ENCODE measurements at regions of chr1 and their contacts with region 1.

Region 1: GRCh38 chr1:66996018-66996682 is 57.8 kb downstream of the SLC35D1 start:
- DNase-seq: peak in 4 of 5 donors; percentile 38 to 57 (median 48)
- ATAC-seq: peak in 3 of 4 donors; percentile 51 to 70 (median 52)
- H3K4me3 ChIP-seq: no peak overlapping the region
- H3K27ac ChIP-seq: no peak overlapping the region
- H3K4me1 ChIP-seq: peaks cover 0 to 9% (median 2%) of the 10 kb centered on the region in 12 donors
- H3K27me3 ChIP-seq: no peaks in the 10 kb centered on the region
- CTCF ChIP-seq: peak; percentile 45 to 83 (median 70)
- POLR2A ChIP-seq: no peak

Region 2: DNA sequence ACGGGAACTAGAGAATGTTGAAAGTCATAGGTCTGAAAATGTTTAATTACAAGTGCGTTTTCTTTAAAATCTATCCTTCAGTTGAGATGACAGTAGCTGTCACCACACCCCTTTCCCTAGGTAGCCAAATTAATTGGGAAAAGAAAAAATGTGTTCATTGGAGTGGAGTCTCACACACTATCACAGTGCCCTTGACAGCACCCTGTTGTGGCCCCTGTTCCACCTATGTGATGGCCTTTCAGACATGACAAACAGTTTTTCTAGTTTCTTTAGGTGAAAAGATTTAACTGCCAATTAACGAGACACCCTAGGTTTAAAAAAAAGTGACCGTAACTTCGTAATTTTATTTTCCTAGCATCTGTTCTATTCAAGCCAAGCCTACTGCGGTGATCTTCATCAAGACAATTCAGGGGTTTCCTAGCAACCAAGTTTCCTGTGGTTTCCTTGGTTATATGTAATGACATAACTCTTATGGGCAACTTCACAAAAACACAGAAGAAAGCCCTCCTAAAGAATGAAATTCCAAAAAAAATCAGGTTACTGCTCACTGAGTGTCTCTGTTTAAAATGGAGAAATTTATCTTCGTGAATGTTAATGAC is 905.2 kb before region 1 on chr1:
- intact Hi-C with region 1: no loop called
- DNase-seq: no peak
- ATAC-seq: no peak
- H3K4me3 ChIP-seq: no peak overlapping the region
- H3K27ac ChIP-seq: no peak overlapping the region
- H3K4me1 ChIP-seq: no peaks in the 10 kb centered on the region
- H3K27me3 ChIP-seq: peaks cover 0 to 4% (median 0%) of the 10 kb centered on the region in 9 donors
- CTCF ChIP-seq: no peak
- POLR2A ChIP-seq: no peak

Region 3: GRCh38 chr1:67149179-67149770 is 153.1 kb after region 1 on chr1:
- intact Hi-C with region 1: loop called (anchors 1 to 5 kb)
- DNase-seq: peak in 4 of 5 donors; percentile 52 to 62 (median 60)
- ATAC-seq: peak in 3 of 4 donors; percentile 90 to 95 (median 90)
- H3K4me3 ChIP-seq: no peak overlapping the region
- H3K27ac ChIP-seq: no peak overlapping the region
- H3K4me1 ChIP-seq: peaks cover 0 to 9% (median 2%) of the 10 kb centered on the region in 12 donors
- H3K27me3 ChIP-seq: peaks cover 0 to 7% (median 0%) of the 10 kb centered on the region in 9 donors
- CTCF ChIP-seq: peak; percentile 49 to 82 (median 77)
- POLR2A ChIP-seq: no peak

Region 4: DNA sequence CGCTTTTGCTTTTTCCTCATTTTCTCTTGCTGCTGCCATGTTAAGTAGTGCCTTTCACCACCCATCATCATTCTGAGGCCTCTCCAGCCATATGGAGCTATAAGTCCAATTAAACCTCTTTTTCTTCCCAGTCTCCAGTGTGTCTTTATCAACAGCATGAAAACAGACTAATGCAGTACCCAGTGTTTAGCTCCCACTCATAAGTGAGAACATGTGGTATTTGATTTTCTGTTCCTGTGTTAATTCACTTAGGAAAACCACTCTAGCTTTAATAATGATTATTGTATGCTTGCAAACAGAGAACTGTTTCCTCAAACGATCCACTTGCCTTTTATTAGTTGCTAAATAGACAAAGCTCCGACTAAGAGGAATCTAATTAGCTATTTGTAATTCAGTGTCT is 213.4 kb after region 1 on chr1:
- intact Hi-C with region 1: loop called in 5 of 10 experiments (anchors 5 to 10 kb)
- DNase-seq: no peak
- ATAC-seq: no peak
- H3K4me3 ChIP-seq: no peak overlapping the region
- H3K27ac ChIP-seq: no peak overlapping the region
- H3K4me1 ChIP-seq: no peaks in the 10 kb centered on the region
- H3K27me3 ChIP-seq: peaks cover 0 to 4% (median 0%) of the 10 kb centered on the region in 9 donors
- CTCF ChIP-seq: no peak
- POLR2A ChIP-seq: no peak

Region 5: DNA sequence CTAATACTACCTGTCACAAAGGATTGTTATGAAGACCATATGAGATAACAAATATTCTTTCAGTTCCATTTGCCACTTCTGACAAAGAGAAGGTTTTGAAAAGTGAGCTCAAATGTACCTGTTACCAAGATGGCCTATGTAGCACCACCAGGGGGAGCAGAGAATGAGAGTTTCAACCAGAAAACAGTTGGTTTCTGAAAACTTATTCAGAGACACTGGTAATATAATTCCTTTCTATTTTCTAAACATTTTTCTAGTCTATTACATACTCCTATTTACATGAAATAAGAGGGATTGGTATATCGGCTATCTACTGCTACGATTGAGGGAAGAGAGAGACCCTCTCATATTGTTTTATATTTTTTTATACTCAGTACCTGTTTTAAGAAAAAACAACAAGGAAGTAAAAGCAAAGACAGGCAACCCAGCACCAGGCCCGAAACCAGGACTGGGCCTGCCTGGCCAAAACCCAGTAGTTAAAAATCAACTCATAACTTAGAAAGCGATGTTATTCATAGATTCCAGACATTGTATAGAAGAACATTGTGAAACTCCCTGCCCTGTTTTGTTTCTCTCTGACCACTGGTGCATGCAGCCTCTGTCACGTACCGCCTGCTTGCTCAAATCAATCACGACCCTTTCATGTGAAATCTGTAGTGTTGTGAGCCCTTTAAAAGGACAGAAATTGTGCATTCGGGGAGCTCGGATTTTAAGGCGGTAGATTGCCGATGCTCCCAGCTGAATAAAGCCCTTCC is 218.4 kb after region 1 on chr1:
- intact Hi-C with region 1: loop called in 5 of 10 experiments (anchors 5 to 10 kb)
- DNase-seq: no peak
- ATAC-seq: no peak
- H3K4me3 ChIP-seq: no peak overlapping the region
- H3K27ac ChIP-seq: no peak overlapping the region
- H3K4me1 ChIP-seq: peaks cover 0 to 4% (median 0%) of the 10 kb centered on the region in 12 donors
- H3K27me3 ChIP-seq: no peaks in the 10 kb centered on the region
- CTCF ChIP-seq: peak; percentile 16 to 55 (median 36)
- POLR2A ChIP-seq: no peak

Measured in heart left ventricle (tissue), 16 donors.